PC-9 (cell line): ENCODE measurements at regions of chr12 and their contacts with region 1.

Region 1: DNA sequence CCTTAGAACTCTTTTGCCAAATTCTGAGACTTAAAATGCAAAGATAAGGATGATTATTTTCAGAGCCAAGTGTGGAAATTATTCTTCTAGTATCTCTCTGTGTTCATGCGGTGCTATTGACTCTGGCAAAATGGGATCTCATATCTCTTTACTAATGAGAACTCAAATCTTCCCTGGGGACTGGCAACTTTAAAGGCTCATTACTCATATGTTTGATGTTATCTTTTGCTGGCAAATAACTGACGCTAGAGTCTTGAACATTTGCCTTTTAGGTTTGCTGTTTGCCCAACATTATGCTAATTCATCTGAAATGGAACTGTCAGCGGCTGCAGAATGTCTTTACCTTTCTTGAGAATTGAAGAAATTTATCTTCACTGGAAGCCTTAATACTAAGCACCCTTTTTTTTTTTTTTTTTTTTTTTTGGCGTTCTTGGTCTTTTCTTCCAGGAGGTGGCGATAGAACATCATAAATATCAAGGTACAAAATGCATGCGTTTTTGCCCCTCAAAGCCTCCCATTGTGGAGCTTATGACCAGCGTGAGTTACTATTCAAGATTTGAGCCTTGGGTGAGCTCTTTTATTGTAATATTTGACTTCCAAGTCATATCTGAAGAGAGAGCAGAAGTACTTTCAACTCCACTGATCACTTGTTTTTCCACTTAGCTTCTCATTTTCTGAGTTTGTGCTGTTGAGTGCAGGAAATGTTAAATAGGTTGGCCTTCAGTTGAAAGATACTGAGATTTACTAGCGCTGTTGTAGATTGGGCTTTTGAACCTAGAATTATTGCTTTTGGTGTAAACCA is 86.6 kb downstream of the CAND1 start:
- DNase-seq: peak; percentile 15 to 68
- H3K4me3 ChIP-seq: no peak overlapping the region
- H3K27ac ChIP-seq: no peak overlapping the region
- H3K4me1 ChIP-seq: peaks cover 31% of the 10 kb centered on the region
- H3K27me3 ChIP-seq: no peaks in the 10 kb centered on the region
- CTCF ChIP-seq: peak; percentile 84

Region 2: GRCh38 chr12:67382241-67382871 is 26.6 kb after region 1 on chr12:
- CTCF ChIA-PET with region 1: interaction called, 12 read pairs
- POLR2A ChIA-PET with region 1: no interaction called
- intact Hi-C with region 1: no loop called
- DNase-seq: no peak
- H3K4me3 ChIP-seq: no peak overlapping the region
- H3K27ac ChIP-seq: no peak overlapping the region
- H3K4me1 ChIP-seq: peaks cover 5% of the 10 kb centered on the region
- H3K27me3 ChIP-seq: no peaks in the 10 kb centered on the region
- CTCF ChIP-seq: no peak

Region 3: GRCh38 chr12:67456431-67456901 is 100.7 kb after region 1 on chr12:
- CTCF ChIA-PET with region 1: no interaction called
- POLR2A ChIA-PET with region 1: interaction called, 11 read pairs
- intact Hi-C with region 1: no loop called
- DNase-seq: peak in 1 of 2 experiments; percentile 24
- H3K4me3 ChIP-seq: no peak overlapping the region
- H3K27ac ChIP-seq: no peak overlapping the region
- H3K4me1 ChIP-seq: peaks cover 10% of the 10 kb centered on the region; the same call in 1 of the 2 replicates
- H3K27me3 ChIP-seq: no peaks in the 10 kb centered on the region
- CTCF ChIP-seq: no peak

Region 4: GRCh38 chr12:67558775-67559174 is 203.0 kb after region 1 on chr12:
- CTCF ChIA-PET with region 1: interaction called, 10 read pairs
- POLR2A ChIA-PET with region 1: no interaction called
- intact Hi-C with region 1: no loop called
- DNase-seq: no peak
- H3K4me3 ChIP-seq: no peak overlapping the region
- H3K27ac ChIP-seq: no peak overlapping the region
- H3K4me1 ChIP-seq: peaks cover 10% of the 10 kb centered on the region
- H3K27me3 ChIP-seq: no peaks in the 10 kb centered on the region
- CTCF ChIP-seq: no peak

Region 5: DNA sequence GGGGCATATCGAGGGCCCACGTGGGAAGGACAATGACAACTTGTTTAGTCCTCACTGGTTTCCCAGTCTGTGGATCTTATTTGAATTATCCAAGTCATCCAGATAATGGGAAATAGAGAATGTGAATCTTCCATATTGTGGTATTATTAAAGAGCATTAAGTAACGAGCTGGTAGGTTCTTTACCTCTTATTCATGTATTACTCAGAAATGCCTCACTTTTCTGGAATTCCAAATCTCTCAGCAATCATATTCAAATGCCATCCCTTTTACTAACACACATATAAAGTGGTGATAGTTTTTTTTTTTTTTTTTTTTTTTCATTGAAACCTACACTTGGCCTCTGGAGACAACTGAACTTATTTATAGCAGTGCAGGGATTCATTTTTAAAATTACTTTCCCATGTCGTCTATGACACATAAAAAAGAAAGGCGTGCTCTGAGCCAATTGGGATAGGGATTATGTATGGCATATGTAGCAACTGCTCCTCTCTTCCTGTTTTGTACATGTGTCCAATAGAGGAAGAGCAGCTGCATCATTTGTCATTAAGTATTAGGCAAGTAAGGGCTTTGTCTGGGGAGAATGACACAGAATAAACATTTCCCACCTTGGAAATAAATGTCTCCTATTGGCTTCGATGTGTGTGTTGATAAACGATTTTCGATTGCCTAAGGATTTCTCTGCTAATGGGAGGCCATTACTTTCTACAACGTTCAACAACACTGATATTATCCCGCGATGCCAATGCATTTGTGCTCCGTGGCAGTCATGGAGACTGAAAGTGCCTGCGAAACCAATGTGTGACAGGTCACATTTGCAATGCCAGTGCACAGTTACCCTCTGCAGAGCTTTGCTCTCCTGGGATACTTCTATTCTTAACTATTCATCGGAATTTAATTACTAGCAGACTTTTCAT is 554.8 kb after region 1 on chr12:
- CTCF ChIA-PET with region 1: interaction called, 12 read pairs
- POLR2A ChIA-PET with region 1: no interaction called
- intact Hi-C with region 1: no loop called
- DNase-seq: peak in 1 of 2 experiments; percentile 87
- H3K4me3 ChIP-seq: no peak overlapping the region
- H3K27ac ChIP-seq: peak overlapping the region; percentile 63
- H3K4me1 ChIP-seq: peaks cover 23% of the 10 kb centered on the region
- H3K27me3 ChIP-seq: no peaks in the 10 kb centered on the region
- CTCF ChIP-seq: no peak

Region 6: DNA sequence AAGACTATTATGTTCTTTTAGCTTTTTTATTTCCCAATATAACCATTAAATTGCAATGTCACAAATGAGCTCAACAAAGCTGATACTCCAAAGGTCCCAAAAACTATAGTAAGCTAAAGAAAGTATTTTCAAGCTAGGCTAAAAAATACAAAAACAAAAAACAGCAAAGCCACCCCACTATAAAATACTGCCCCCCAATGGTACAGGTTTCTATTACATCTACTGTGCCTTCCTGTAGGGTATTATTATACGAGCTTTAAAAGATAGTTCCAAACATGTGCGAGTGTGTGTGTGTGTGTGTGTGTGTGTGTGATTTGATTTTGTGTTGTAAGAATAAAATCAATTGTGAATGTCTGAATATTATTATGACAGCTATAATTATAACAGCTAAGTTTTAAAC is 802.7 kb after region 1 on chr12:
- CTCF ChIA-PET with region 1: interaction called, 16 read pairs
- POLR2A ChIA-PET with region 1: no interaction called
- intact Hi-C with region 1: no loop called
- DNase-seq: no peak
- H3K4me3 ChIP-seq: no peak overlapping the region
- H3K27ac ChIP-seq: no peak overlapping the region
- H3K4me1 ChIP-seq: no peaks in the 10 kb centered on the region
- H3K27me3 ChIP-seq: no peaks in the 10 kb centered on the region
- CTCF ChIP-seq: peak; percentile 68